PC-3 (cell line): ENCODE measurements at regions of chr7 and their contacts with region 1.

Region 1: GRCh38 chr7:141975806-141976523 is 2.4 kb upstream of the TAS2R38 start:
- DNase-seq: peak; percentile 71
- ATAC-seq: peak; percentile 86
- H3K4me3 ChIP-seq: peak overlapping the region; percentile 60
- H3K27ac ChIP-seq: no peak overlapping the region
- H3K4me1 ChIP-seq: 0 out of 2 replicates have a peak, but pooled peaks cover 4% of the 10 kb centered on the region
- H3K27me3 ChIP-seq: peaks cover 11% of the 10 kb centered on the region; the same call in 1 of the 2 replicates
- CTCF ChIP-seq: peak; percentile 93

Region 2: DNA sequence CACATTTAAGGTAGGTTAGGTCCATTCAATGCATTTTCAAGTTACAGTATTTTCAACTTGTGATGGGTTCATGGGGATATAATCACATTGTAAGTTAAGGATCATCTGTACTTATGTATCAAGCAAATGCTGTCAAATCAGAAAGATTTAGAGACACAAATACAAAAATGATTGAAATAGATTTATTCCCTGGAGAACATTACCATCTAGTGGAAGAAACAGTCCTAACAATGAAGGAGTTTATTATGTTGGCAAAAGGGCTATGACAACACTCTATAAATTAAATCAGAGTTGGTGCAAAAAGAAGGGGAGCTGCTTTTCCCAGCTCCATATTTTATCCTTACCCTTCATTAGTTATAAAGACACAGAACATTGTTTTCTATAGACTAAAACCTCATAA is 212.9 kb after region 1 on chr7:
- CTCF ChIA-PET with region 1: no interaction called
- POLR2A ChIA-PET with region 1: no interaction called
- intact Hi-C with region 1: loop called (anchors 1 kb)
- DNase-seq: peak; percentile 49
- ATAC-seq: no peak
- H3K4me3 ChIP-seq: no peak overlapping the region
- H3K27ac ChIP-seq: no peak overlapping the region
- H3K4me1 ChIP-seq: no peaks in the 10 kb centered on the region
- H3K27me3 ChIP-seq: peaks cover 31% of the 10 kb centered on the region; the same call in 1 of the 2 replicates
- CTCF ChIP-seq: peak; percentile 63

Region 3: GRCh38 chr7:142301923-142302550 is 326.1 kb after region 1 on chr7:
- CTCF ChIA-PET with region 1: no interaction called
- POLR2A ChIA-PET with region 1: no interaction called
- intact Hi-C with region 1: loop called (anchors 1 kb)
- DNase-seq: peak; percentile 31
- ATAC-seq: peak; percentile 43; the same call in 1 of the 2 replicates
- H3K4me3 ChIP-seq: no peak overlapping the region
- H3K27ac ChIP-seq: no peak overlapping the region
- H3K4me1 ChIP-seq: no peaks in the 10 kb centered on the region
- H3K27me3 ChIP-seq: peaks cover 73% of the 10 kb centered on the region
- CTCF ChIP-seq: peak; percentile 68